Motor neuron (in vitro differentiated cells): ENCODE measurements at regions of chr16 and their contacts with region 1.

Region 1: DNA sequence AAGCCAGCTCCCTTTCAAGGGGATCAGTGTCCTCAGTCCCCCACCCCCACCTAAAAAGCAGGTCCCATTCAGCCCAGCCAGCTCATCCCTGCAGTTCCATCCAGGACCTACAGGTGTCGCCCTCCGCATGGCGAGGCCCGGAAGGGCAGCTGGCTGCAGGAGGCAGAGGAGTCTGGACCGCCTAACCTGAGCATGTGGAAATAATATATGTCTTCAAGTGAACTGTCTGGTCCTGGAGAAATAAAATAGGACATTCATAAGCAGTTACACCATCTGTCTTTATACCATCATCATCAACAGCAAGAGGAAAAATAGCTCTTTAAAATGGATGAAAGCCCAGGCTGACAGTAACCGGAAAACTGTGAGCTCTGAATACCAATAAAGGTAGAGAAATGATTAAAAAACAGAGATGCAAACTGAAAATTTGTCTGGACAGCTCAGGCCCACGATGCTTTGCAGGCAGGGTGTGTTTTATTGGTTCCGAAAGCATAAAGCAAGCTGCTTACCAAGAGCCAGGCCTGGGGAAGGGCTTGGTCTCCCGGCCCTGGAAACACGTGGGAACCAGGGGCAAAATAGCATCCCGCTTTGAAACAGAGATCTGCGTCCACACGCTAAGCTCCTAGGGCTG is 215.2 kb downstream of the ZFHX3 start:
- ATAC-seq: peak; percentile 82 to 97 (median 90)
- H3K4me3 ChIP-seq: no peak overlapping the region
- H3K27ac ChIP-seq: peak overlapping the region; percentile 4 to 36
- H3K4me1 ChIP-seq: peaks cover 41 to 43% of the 10 kb centered on the region in 2 donors

Region 2: DNA sequence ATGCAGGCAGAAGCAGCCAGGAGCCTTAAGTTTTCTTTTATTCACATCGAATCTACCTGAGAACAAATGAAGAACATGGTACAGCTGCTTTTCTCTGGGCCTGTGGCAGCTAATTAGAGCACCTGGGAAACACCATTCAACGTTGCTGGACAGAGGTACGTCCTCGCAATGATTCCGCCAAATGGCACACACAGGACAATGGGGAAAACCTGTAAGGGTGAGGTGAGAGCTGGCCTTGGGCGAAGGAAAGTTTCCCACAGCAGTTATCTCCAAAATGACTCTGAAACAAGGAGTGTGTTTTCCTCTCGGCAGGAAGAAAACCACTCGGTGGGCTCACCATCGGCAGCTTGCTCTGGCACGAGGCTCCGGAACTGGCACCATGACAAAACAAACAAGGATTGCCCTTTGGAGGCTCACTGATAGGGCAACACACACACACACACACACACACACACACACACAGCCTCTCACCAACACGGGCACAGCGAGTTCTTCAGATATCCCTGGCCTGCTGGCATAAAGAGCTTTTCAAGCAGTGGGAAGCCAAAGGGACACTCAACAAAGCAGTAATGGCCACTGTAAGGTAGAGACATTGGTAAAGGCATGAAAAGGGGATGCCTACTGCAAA is 141.5 kb after region 1 on chr16:
- in situ Hi-C with region 1: no loop called
- ATAC-seq: no peak
- H3K4me3 ChIP-seq: no peak overlapping the region
- H3K27ac ChIP-seq: no peak overlapping the region
- H3K4me1 ChIP-seq: peaks cover 16 to 43% of the 10 kb centered on the region in 2 donors

Region 3: DNA sequence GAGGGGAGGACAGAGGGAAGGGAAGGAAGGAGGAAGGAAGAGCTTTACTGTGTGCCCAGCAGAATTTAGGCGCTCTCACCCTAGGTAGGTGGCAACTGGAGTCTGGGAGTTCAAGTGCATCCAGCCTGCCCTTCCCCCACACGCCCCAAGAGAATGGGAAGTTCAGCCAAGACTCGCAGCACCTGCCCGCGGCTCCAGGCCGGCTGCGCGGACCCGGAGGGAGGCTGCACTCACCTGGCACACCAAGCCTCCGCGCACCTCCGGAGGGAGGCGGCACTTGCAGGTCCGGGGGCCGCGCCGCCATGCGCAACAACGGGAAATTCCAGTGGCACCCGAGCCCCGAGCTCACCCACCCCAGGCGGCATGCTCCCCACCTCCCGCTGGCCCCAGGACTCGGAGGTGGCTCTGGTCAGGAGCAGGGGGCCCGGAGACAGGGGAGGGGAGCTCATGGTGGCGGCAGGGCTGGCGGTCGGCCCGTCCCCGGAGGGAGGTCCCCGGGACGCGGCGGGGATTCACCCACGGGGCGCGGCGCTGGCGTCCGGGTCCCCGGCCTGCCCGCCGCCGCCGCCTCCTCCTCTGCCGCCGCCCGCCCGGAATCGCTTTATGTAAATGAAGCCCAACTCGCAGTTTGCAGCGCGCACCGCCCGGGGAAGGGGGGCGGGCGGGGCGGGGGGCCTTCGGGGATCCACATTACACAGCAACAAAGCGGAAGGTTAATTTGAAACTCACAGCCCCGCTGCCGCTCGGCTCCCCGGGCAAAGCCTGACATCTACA is 215.0 kb after region 1 on chr16 and contains the start of gene ZFHX3:
- in situ Hi-C with region 1: loop called in 2 of 9 experiments (anchors 25 kb)
- ATAC-seq: peak; percentile 68 to 85 (median 74)
- H3K4me3 ChIP-seq: peak within 1 kb of the TSS; percentile 39 to 63 (median 48)
- H3K27ac ChIP-seq: peak within 1 kb of the TSS; percentile 84 to 91
- H3K4me1 ChIP-seq: peaks cover 67 to 88% of the 10 kb centered on the region in 2 donors
- total RNA-seq, gene ZFHX3: 7.4 to 31.9 (median 21.7) TPM

Region 4: DNA sequence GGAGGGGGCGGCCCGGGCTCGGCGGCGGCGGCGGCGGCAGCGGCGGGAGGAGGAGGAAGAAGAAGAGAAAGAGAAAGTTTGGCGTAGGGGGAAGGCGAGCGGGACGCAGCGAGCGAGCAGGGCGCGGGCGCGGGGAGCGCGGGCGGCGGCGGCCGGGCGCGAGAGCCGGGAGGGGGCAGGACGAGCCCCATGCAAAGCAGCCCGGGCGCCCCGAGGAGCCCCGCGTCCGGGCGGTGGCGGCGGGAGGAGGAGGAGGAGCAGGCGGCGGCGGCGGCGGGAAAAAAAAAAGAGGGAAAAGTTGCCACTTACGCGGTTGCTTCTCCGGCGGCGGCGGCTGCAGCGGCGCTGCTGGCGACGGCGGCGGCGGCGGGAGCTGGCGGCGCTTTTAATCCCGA is 225.5 kb after region 1 on chr16:
- in situ Hi-C with region 1: loop called in 1 of 9 experiments (anchors 25 kb)
- ATAC-seq: peak in 7 of 8 experiments; percentile 1 to 52 (median 15)
- H3K4me3 ChIP-seq: peak overlapping the region; percentile 56 to 95 (median 86)
- H3K27ac ChIP-seq: peak overlapping the region; percentile 91 to 94
- H3K4me1 ChIP-seq: peaks cover 16 to 46% of the 10 kb centered on the region in 2 donors

Region 5: GRCh38 chr16:73196670-73197069 is 363.9 kb after region 1 on chr16:
- in situ Hi-C with region 1: loop called in 2 of 9 experiments (anchors 25 kb)
- ATAC-seq: peak in 4 of 8 experiments; percentile 23 to 95 (median 92)
- H3K4me3 ChIP-seq: no peak overlapping the region
- H3K27ac ChIP-seq: no peak overlapping the region
- H3K4me1 ChIP-seq: peaks cover 9 to 14% of the 10 kb centered on the region in 2 donors